Naive thymus-derived CD8-positive, alpha-beta T cell (primary cell): ENCODE measurements at regions of chr10 and their contacts with region 1.

Region 1: GRCh38 chr10:15196021-15196834 is 27.7 kb upstream of the NMT2 start:
- DNase-seq: no peak
- ATAC-seq: no peak
- H3K4me3 Mint-ChIP-seq: peak overlapping the region in 9 of 10 donors; percentile 12 to 66 (median 41)
- H3K27ac Mint-ChIP-seq: peak overlapping the region; percentile 8 to 98 (median 74)
- H3K4me1 Mint-ChIP-seq: peaks cover 17 to 39% (median 26%) of the 10 kb centered on the region in 4 donors
- H3K27me3 Mint-ChIP-seq: no peaks in the 10 kb centered on the region

Region 2: GRCh38 chr10:15092855-15093408 is 103.3 kb before region 1 on chr10:
- POLR2A ChIA-PET with region 1: no interaction called
- DNase-seq: no peak
- ATAC-seq: no peak
- H3K4me3 Mint-ChIP-seq: no peak overlapping the region
- H3K27ac Mint-ChIP-seq: peak overlapping the region in 1 of 10 donors; percentile 9
- H3K4me1 Mint-ChIP-seq: peaks cover 10 to 16% (median 12%) of the 10 kb centered on the region in 4 donors
- H3K27me3 Mint-ChIP-seq: no peaks in the 10 kb centered on the region

Region 3: GRCh38 chr10:15182540-15183207 is 13.6 kb before region 1 on chr10:
- POLR2A ChIA-PET with region 1: interaction called, 11 read pairs
- DNase-seq: no peak
- ATAC-seq: no peak
- H3K4me3 Mint-ChIP-seq: no peak overlapping the region
- H3K27ac Mint-ChIP-seq: peak overlapping the region in 5 of 10 donors; percentile 4 to 76 (median 17)
- H3K4me1 Mint-ChIP-seq: peaks cover 22 to 48% (median 33%) of the 10 kb centered on the region in 4 donors
- H3K27me3 Mint-ChIP-seq: no peaks in the 10 kb centered on the region

Region 4: GRCh38 chr10:15209827-15210509 is 13.7 kb after region 1 on chr10:
- POLR2A ChIA-PET with region 1: interaction called, 18 read pairs
- DNase-seq: peak; percentile 58 to 92 (median 76)
- ATAC-seq: peak; percentile 53 to 74
- H3K4me3 Mint-ChIP-seq: peak overlapping the region; percentile 28 to 75 (median 62)
- H3K27ac Mint-ChIP-seq: peak overlapping the region; percentile 79 to 97 (median 88)
- H3K4me1 Mint-ChIP-seq: peaks cover 16 to 64% (median 56%) of the 10 kb centered on the region in 4 donors
- H3K27me3 Mint-ChIP-seq: no peaks in the 10 kb centered on the region